Adrenal gland (tissue), 19 donors: ENCODE measurements at regions of chr1 and their contacts with region 1.

Region 1: DNA sequence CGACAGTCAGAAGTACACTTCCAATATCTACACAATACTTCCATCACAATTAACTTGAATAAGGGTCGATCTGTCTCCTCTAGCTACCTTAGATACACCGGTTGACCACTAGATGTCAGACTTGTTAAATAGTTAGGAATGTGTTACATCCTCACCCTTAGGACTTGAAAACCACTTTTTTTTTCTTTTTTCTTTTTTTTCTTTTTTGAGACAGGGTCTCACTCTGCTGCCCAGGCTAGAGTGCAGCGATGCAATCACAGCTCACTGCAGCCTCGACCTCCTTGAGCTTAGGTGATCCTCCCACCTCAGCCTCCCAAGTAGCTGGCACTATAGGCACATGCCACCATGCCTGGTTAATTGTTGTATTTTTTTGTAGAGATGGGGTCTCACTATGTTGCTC is 120.4 kb upstream of the GREM2 start:
- DNase-seq: no peak
- H3K4me3 ChIP-seq: no peak overlapping the region
- H3K27ac ChIP-seq: no peak overlapping the region
- H3K4me1 ChIP-seq: no peaks in the 10 kb centered on the region
- H3K27me3 ChIP-seq: no peaks in the 10 kb centered on the region
- CTCF ChIP-seq: peak; percentile 49 to 73 (median 53)
- POLR2A ChIP-seq: no peak

Region 2: GRCh38 chr1:240474133-240474614 is 258.2 kb before region 1 on chr1:
- intact Hi-C with region 1: no loop called
- DNase-seq: peak in 3 of 7 donors; percentile 10 to 24 (median 18)
- H3K4me3 ChIP-seq: no peak overlapping the region
- H3K27ac ChIP-seq: peak overlapping the region in 1 of 5 donors; percentile 16
- H3K4me1 ChIP-seq: no peaks in the 10 kb centered on the region
- H3K27me3 ChIP-seq: no peaks in the 10 kb centered on the region
- CTCF ChIP-seq: no peak
- POLR2A ChIP-seq: no peak

Region 3: GRCh38 chr1:240941701-240942370 is 209.4 kb after region 1 on chr1:
- intact Hi-C with region 1: loop called in 1 of 2 experiments (anchors 5 kb)
- DNase-seq: no peak
- H3K4me3 ChIP-seq: no peak overlapping the region
- H3K27ac ChIP-seq: no peak overlapping the region
- H3K4me1 ChIP-seq: no peaks in the 10 kb centered on the region
- H3K27me3 ChIP-seq: no peaks in the 10 kb centered on the region
- CTCF ChIP-seq: no peak
- POLR2A ChIP-seq: no peak

Region 4: GRCh38 chr1:241499910-241500309 is 767.5 kb after region 1 on chr1:
- intact Hi-C with region 1: loop called in 1 of 2 experiments (anchors 10 kb)
- DNase-seq: peak in 4 of 7 donors; percentile 16 to 37 (median 22)
- H3K4me3 ChIP-seq: no peak overlapping the region
- H3K27ac ChIP-seq: no peak overlapping the region
- H3K4me1 ChIP-seq: no peaks in the 10 kb centered on the region
- H3K27me3 ChIP-seq: no peaks in the 10 kb centered on the region
- CTCF ChIP-seq: peak; percentile 16 to 55 (median 42)
- POLR2A ChIP-seq: no peak